BJ (cell line): ENCODE measurements at regions of chr3 and their contacts with region 1.

Region 1: DNA sequence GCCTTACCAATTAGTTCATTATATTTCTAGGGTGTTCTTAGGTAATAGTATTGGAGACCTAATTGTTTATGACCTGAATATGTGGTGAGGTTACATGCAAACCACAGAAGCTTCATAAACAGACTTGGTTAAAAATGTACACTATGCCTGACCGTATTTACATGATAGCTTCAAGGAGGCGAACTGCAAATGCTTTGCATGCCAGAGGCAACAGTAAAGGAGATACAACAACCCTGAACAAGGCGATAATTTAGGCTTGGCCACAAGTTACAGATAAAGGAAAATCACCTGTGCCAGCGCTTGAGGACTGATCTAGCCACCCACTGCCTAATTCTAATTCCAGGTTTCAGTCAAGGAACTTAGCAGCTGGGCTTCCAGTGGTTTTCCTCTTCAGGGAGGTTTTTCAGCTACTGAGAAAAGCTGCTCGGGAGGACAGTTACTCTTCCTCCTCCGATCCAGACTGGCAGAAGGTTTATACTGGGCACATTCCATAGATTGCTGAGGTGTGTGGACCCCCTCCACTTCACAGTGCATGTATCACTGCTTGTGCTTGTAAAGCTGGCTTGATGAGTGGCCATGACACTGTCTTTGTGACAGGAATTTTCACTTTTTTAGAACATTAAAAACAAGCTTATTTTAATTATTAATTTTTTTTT is 95.6 kb downstream of the DHX36 start:
- DNase-seq: no peak
- H3K4me3 ChIP-seq: no peak overlapping the region
- H3K27me3 ChIP-seq: no peaks in the 10 kb centered on the region
- CTCF ChIP-seq: no peak

Region 2: DNA sequence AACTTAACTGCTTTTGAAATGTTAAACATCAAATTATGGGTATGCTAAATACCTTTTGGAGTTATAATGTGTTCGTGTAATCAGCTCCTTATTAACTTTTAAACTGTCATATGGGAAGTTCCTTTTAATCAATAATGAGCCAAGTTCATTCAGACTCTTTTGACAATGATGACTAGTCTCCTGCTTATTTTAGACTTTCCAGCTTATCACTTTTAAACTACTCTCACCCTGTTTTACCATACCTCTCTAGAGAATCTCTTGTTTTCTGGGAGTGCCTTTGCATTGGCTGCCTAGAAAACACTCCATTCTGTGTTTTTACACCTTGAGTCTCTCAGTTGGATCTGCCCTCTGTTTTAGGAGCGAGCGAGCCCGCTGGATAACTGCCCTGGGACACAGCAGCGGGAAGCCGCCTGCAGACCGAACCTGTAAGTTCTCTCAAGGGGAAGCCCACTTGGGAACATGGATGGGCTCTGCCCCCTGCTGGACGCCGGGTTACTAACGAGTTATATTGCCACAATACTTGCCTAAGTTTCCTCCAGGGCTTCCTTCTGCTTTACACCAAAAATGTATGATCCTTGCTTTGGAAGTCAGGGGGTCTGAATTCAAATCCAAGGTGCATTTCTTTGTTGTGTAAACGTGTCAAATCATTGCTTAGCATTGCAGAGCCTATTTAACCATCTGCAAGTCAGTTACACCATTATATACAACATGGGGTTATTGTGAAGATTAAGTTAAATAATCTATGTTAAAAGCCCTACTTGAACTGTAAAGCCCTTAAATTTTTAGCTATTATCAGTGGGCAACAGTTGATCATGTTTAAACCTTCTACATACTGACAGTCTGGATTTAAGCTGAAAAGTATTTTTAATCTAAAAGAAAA is 24.3 kb after region 1 on chr3:
- CTCF ChIA-PET with region 1: interaction called, 11 read pairs
- POLR2A ChIA-PET with region 1: no interaction called
- DNase-seq: peak; percentile 23
- H3K4me3 ChIP-seq: no peak overlapping the region
- H3K27me3 ChIP-seq: no peaks in the 10 kb centered on the region
- CTCF ChIP-seq: peak; percentile 94